ENCODE measurements at regions of chr5 and their contacts with region 1.

Region 1: DNA sequence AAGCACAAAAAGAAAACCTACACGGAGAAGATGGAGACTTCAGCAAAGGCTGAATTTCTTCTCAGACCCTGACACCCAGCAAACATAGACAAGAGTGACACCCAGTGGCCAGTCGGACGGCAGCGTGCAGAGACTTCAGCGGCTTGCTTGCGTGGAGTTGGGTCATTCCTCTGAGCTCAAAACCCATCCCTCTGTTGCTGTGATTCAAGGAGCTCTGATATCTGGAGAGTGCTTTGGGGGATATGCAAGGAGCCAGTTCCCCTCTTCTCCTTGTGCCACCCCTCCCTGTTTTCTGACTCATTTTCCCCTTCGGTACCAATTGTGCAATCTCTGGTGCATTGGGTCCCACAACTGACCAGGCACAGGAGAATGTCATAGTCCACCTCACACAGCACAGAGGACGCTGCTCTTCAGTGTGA is 27.5 kb downstream of the SH3TC2 start:
- DNase-seq: peak; percentile 83
- ATAC-seq: peak; percentile 87
- H3K4me3 ChIP-seq: no peak overlapping the region
- H3K27ac ChIP-seq: no peak overlapping the region
- H3K4me1 ChIP-seq: peaks cover 9% of the 10 kb centered on the region
- H3K27me3 ChIP-seq: no peaks in the 10 kb centered on the region
- CTCF ChIP-seq: peak; percentile 98
- POLR2A ChIP-seq: peak; percentile 34; the same call in 1 of the 2 replicates
- RAD21 ChIP-seq: peak; percentile 98

Region 2: GRCh38 chr5:148443998-148444397 is 591.4 kb before region 1 on chr5:
- CTCF ChIA-PET with region 1: no interaction called
- POLR2A ChIA-PET with region 1: no interaction called
- dilution Hi-C with region 1: no loop called
- in situ Hi-C with region 1: loop called (anchors 10 kb)
- intact Hi-C with region 1: loop called (anchors 2 kb)
- DNase-seq: peak; percentile 78
- ATAC-seq: peak; percentile 89
- H3K4me3 ChIP-seq: no peak overlapping the region
- H3K27ac ChIP-seq: no peak overlapping the region
- H3K4me1 ChIP-seq: no peaks in the 10 kb centered on the region
- H3K27me3 ChIP-seq: peaks cover 3% of the 10 kb centered on the region; the same call in 1 of the 2 replicates
- CTCF ChIP-seq: peak; percentile 77
- POLR2A ChIP-seq: no peak
- RAD21 ChIP-seq: peak; percentile 68

Region 3: DNA sequence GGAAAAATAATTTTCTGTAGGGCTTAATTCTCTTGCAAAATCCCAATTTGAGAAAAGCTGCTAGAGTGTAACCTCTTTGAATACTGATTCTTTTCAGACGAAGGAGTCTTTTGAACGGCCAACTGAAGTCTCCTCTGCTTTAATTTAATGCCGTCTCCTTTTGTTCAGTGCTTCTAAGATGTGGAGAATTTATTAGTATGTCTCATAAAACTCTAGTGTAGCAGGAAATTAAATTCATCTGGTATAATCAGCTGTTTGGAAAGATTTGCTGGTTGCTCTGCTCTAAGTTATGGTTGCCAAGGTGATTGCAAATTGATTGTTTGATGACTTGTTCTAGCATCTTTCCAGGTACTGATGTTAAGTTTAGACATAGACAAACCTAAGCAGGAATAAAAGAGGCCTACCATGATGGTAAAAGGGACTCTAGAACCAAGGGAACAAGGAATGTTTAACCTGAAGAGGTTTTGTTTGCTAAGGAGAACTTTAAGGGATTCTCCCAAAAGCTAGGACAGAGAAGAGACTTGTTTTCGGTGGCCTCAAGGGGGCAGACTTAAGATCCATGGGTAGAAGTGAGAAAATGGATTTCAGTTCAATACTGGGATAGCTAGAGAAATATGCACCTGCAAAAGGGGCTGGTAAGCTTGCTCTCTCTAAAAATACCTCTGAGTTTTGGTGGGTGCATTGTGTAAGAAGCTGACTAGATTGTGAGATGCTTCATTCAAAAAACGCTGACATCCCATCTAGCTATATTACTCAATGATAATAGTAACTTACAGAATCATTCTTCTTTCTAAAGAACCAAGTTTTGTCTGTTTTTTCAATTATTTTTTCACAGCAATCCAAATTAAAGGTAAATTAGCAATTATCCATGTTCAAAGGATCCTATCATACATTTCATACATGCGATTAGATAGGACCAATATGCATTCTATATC is 214.7 kb before region 1 on chr5:
- CTCF ChIA-PET with region 1: interaction called, 5 read pairs
- POLR2A ChIA-PET with region 1: no interaction called
- dilution Hi-C with region 1: no loop called
- in situ Hi-C with region 1: no loop called
- intact Hi-C with region 1: loop called (anchors 1 kb)
- DNase-seq: peak; percentile 50
- ATAC-seq: peak; percentile 77
- H3K4me3 ChIP-seq: no peak overlapping the region
- H3K27ac ChIP-seq: no peak overlapping the region
- H3K4me1 ChIP-seq: 0 out of 2 replicates have a peak, but pooled peaks cover 2% of the 10 kb centered on the region
- H3K27me3 ChIP-seq: no peaks in the 10 kb centered on the region; the same call in 1 of the 2 replicates
- CTCF ChIP-seq: peak; percentile 59
- POLR2A ChIP-seq: no peak
- RAD21 ChIP-seq: peak; percentile 57

Region 4: DNA sequence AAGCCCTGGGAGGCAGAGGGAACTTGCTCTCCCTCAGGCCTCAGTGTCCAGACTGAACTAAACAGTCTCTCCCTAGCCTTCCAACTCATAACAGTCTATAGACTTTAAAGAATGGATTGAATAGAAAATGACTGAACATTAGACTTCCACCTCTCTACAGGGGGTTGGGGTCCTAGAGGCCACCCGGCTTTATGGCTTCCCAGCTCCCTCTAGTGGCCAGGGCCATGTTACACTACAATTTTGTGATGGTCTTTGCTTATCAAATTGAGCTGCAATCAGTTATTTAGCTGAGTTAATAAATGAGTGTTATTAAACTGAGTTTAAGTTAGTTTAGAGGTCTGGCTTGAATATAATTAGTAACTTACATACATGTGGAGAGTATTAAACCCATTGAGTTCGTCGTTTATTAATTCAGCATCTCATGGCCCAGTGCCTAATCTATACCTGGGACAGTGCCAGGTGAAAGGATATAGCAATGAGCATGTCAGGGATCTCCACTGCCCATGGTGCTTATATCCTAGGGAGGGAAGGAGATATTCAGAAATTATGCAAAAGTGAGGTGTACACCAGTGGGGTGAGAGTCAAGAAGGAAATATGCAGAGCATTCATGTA is 77.7 kb before region 1 on chr5:
- CTCF ChIA-PET with region 1: interaction called, 8 read pairs
- POLR2A ChIA-PET with region 1: no interaction called
- dilution Hi-C with region 1: no loop called
- in situ Hi-C with region 1: no loop called
- intact Hi-C with region 1: loop called (anchors 2 kb)
- DNase-seq: peak; percentile 43
- ATAC-seq: peak; percentile 73
- H3K4me3 ChIP-seq: no peak overlapping the region
- H3K27ac ChIP-seq: no peak overlapping the region
- H3K4me1 ChIP-seq: no peaks in the 10 kb centered on the region
- H3K27me3 ChIP-seq: no peaks in the 10 kb centered on the region
- CTCF ChIP-seq: peak; percentile 83
- POLR2A ChIP-seq: no peak
- RAD21 ChIP-seq: peak; percentile 86

Region 5: DNA sequence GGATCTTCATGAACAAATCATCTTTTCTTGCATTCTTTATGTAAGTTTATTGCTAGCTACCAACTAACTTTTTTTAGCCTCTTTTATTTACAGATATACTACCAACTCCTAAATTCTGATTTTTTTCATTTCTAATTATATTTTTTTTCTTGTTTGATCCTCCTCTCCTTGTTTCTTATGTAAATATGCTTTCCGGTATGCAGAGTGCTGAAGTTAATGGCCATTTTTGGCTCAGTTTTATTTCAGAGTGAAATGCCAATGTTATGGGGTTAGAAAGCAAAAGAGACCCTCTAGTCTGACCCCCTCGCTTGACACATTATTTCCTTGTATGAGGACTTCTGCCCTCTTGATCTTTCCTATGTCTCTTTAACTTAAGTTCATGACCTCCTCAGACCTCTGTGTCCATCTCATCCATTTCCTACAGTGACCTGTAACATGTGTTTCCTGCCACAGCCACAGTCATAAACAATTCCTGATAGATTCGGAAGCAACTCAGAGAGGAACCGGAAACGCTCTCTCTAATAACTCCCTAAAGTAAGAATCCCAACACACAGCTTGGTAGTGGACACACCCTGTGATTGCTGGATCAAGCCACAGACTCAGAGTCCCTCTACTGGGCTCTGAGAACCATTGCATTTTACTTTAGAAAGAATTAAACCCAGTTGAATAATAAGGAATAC is 193.4 kb after region 1 on chr5:
- CTCF ChIA-PET with region 1: interaction called, 3 read pairs
- POLR2A ChIA-PET with region 1: no interaction called
- dilution Hi-C with region 1: no loop called
- in situ Hi-C with region 1: no loop called
- intact Hi-C with region 1: loop called (anchors 2 kb)
- DNase-seq: peak; percentile 92
- ATAC-seq: peak; percentile 96
- H3K4me3 ChIP-seq: no peak overlapping the region
- H3K27ac ChIP-seq: peak overlapping the region; percentile 31; the same call in 1 of the 2 replicates
- H3K4me1 ChIP-seq: peaks cover 8% of the 10 kb centered on the region
- H3K27me3 ChIP-seq: no peaks in the 10 kb centered on the region
- CTCF ChIP-seq: peak; percentile 98
- POLR2A ChIP-seq: peak; percentile 41; the same call in 1 of the 2 replicates
- RAD21 ChIP-seq: peak; percentile 99

Measured in IMR-90 (cell line).